ENCODE measurements at regions of chr3 and their contacts with region 1.

Region 1: DNA sequence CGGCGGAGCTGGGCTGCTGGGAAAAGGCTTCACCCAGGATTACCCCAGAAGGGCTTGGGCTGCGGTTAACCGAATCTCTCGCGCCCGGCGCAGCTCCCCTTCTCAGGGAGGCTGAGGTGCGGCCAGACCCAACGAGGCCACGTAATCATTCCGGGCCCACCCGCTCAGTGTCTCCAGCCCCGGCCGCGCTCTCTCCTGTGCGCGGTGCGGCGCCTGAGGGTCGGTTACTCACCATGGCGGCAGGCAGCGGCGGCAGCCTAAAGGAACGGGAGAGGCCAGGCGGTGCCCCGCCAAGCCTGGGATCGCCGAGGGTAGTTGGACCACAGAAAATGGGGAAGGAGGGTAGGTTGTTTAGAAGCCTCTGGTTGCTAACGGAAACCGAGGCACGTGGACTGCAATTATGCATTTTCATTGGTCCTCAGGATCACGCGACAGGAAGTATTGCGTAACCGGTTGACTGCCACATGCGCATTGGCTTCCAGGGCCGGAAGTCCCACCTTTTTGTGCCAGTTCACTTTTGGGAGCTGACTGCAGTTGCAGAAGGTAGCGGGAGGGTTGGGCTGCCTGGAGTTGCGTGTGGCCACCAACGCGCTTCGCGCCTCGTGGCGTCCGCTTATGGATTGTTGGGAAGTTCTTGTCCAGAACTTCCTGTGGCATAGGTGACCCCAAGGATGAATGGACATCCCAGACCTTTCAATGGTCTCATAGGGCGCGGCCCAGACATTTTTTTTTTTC is at the start of gene LZTFL1:
- DNase-seq: peak; percentile 62 to 94 (median 91)
- ATAC-seq: peak; percentile 94
- H3K4me3 ChIP-seq: peak within 1 kb of the TSS; percentile 77
- H3K4me3 Mint-ChIP-seq: peak within 1 kb of the TSS; percentile 90 to 97 (median 94)
- H3K27ac ChIP-seq: peak within 1 kb of the TSS; percentile 88
- H3K27ac Mint-ChIP-seq: peak within 1 kb of the TSS; percentile 86 to 98 (median 94)
- H3K4me1 ChIP-seq: peaks cover 8 to 13% of the 10 kb centered on the region in 2 donors
- H3K4me1 Mint-ChIP-seq: peaks cover 6 to 41% (median 25%) of the 10 kb centered on the region in 7 donors
- H3K27me3 ChIP-seq: no peaks in the 10 kb centered on the region
- H3K27me3 Mint-ChIP-seq: peaks cover 0 to 65% (median 0%) of the 10 kb centered on the region in 5 donors
- total RNA-seq, gene LZTFL1: 8.5 to 15.7 (median 12.6) TPM

Region 2: DNA sequence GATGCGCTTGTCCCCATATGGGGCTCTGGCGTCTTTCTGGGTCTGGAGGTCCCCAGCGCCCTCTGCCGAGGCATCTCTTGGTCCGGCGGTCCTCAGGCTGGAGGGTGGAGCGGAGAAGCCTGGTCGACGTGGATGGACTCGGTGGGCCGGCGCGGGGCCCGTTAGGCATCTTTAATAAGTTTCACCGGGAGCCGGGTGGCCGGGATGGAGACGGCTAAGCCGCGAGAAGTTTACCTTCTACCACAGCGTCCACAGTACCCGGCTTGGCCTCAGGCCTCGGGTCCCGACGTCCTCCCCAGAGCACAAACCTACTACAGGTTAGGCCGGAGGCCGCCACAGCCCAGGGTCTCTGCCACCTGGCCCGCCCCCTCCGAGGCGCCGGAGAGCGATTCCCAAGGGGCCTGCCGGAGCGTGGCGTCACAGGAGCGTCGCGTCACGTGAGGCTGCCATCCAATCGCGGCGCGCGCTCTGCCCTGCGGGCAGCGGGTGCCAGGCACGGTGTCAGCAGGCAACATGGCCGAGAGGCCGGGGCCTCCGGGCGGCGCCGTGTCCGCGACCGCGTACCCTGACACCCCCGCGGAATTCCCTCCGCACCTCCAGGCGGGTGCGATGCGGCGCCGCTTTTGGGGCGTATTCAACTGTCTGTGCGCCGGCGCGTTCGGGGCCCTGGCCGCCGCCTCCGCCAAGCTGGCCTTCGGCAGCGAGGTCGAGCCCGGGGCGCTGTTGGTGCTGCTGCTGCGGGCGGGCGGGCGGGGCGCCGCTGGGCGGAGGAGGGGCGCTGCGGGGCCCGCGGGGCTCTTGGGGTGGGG is 980.3 kb before region 1 on chr3 and contains the start of gene TMEM42:
- CTCF ChIA-PET with region 1: no interaction called
- POLR2A ChIA-PET with region 1: no interaction called
- intact Hi-C with region 1: loop called in 1 of 2 experiments (anchors 5 kb)
- DNase-seq: peak; percentile 81 to 89 (median 84)
- ATAC-seq: peak; percentile 97
- H3K4me3 ChIP-seq: peak within 1 kb of the TSS; percentile 78
- H3K4me3 Mint-ChIP-seq: peak within 1 kb of the TSS; percentile 88 to 92 (median 91)
- H3K27ac ChIP-seq: peak within 1 kb of the TSS; percentile 76
- H3K27ac Mint-ChIP-seq: peak within 1 kb of the TSS; percentile 86 to 97 (median 92)
- H3K4me1 ChIP-seq: peaks cover 15 to 29% of the 10 kb centered on the region in 2 donors
- H3K4me1 Mint-ChIP-seq: peaks cover 23 to 48% (median 43%) of the 10 kb centered on the region in 7 donors
- H3K27me3 ChIP-seq: no peaks in the 10 kb centered on the region
- H3K27me3 Mint-ChIP-seq: no peaks in the 10 kb centered on the region
- total RNA-seq, gene TMEM42: 12.1 to 25.1 (median 16.4) TPM

Region 3: GRCh38 chr3:45593708-45594609 is 248.0 kb before region 1 on chr3:
- CTCF ChIA-PET with region 1: no interaction called
- POLR2A ChIA-PET with region 1: no interaction called
- intact Hi-C with region 1: loop called in 1 of 2 experiments (anchors 5 kb)
- DNase-seq: peak; percentile 46 to 83 (median 70)
- ATAC-seq: peak; percentile 83
- H3K4me3 ChIP-seq: peak overlapping the region; percentile 71
- H3K4me3 Mint-ChIP-seq: peak overlapping the region; percentile 84 to 99 (median 90)
- H3K27ac ChIP-seq: peak overlapping the region; percentile 72
- H3K27ac Mint-ChIP-seq: peak overlapping the region; percentile 85 to 96 (median 91)
- H3K4me1 ChIP-seq: peaks cover 44 to 58% of the 10 kb centered on the region in 2 donors
- H3K4me1 Mint-ChIP-seq: peaks cover 48 to 61% (median 55%) of the 10 kb centered on the region in 7 donors
- H3K27me3 ChIP-seq: no peaks in the 10 kb centered on the region
- H3K27me3 Mint-ChIP-seq: peaks cover 0 to 3% (median 0%) of the 10 kb centered on the region in 5 donors

Region 4: GRCh38 chr3:45864760-45865519 is 23.0 kb after region 1 on chr3:
- CTCF ChIA-PET with region 1: no interaction called
- POLR2A ChIA-PET with region 1: interaction called, 4 read pairs
- intact Hi-C with region 1: loop called (anchors 1 kb)
- DNase-seq: peak in 8 of 9 donors; percentile 19 to 67 (median 46)
- ATAC-seq: peak; percentile 30
- H3K4me3 ChIP-seq: no peak overlapping the region
- H3K4me3 Mint-ChIP-seq: peak overlapping the region in 8 of 10 donors; percentile 25 to 63 (median 40)
- H3K27ac ChIP-seq: no peak overlapping the region
- H3K27ac Mint-ChIP-seq: peak overlapping the region in 4 of 9 donors; percentile 3 to 52 (median 44)
- H3K4me1 ChIP-seq: peaks cover 13 to 21% of the 10 kb centered on the region in 2 donors
- H3K4me1 Mint-ChIP-seq: peaks cover 24 to 58% (median 44%) of the 10 kb centered on the region in 7 donors
- H3K27me3 ChIP-seq: no peaks in the 10 kb centered on the region
- H3K27me3 Mint-ChIP-seq: peaks cover 0 to 58% (median 11%) of the 10 kb centered on the region in 5 donors

Region 5: DNA sequence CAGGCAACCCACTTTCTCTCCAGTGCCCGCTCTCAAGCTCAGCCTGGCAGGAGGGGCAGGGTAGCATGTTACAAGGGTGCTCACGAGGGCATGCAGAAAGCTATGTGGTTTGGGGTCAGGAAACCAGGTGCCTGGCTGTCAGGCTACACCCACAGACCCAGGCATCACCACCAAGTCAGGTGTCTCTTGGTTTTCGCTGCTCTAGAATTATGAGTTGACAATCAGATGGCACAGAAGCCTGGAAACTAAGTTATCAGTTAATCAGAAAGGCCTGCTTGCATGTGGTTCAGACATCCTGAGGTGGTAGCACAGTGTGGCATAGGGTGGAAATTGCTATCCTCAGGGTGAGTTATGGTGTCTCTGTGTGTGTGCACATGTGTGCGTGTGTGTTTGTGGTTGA is 28.2 kb after region 1 on chr3:
- CTCF ChIA-PET with region 1: no interaction called
- POLR2A ChIA-PET with region 1: interaction called, 4 read pairs
- intact Hi-C with region 1: loop called (anchors 1 kb)
- DNase-seq: peak in 8 of 9 donors; percentile 33 to 92 (median 88)
- ATAC-seq: peak; percentile 96
- H3K4me3 ChIP-seq: no peak overlapping the region
- H3K4me3 Mint-ChIP-seq: peak overlapping the region in 9 of 10 donors; percentile 0 to 74 (median 45)
- H3K27ac ChIP-seq: no peak overlapping the region
- H3K27ac Mint-ChIP-seq: peak overlapping the region in 8 of 9 donors; percentile 5 to 85 (median 44)
- H3K4me1 ChIP-seq: peaks cover 27 to 28% of the 10 kb centered on the region in 2 donors
- H3K4me1 Mint-ChIP-seq: peaks cover 18 to 58% (median 45%) of the 10 kb centered on the region in 7 donors
- H3K27me3 ChIP-seq: no peaks in the 10 kb centered on the region
- H3K27me3 Mint-ChIP-seq: peaks cover 0 to 70% (median 0%) of the 10 kb centered on the region in 5 donors

Region 6: DNA sequence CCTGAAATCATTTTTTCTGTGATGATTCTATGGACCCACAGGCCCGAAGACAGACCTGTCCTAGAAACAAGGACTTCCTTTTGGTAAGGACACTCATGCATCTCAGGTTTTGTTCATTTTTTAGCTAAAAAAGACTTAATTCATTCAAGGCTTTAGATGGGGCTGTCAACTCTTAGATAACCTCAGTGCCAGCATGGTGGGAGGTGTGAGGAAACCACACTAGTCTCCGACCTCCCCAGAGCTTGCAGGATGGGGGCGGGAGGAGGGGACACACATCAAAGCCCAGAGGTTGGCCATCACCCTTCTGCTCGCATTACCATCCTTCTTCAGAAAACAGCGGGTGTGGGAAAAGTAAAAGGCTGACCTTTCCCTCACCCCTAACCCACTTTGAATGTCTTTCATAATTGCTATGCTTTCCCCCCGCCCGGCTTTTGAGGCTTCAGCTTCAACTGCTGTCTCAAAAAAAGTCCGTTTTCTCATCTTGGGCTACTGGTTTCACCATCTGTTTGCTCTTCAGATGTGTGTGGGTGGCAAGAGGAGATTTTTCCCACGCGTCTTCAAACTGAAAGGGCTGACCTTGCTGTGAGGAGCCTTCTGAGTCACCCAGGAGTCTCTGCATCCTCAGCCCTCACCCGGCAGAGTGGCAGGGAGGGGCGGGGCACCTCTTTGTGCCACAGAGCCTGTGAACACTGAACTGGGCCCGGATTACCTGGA is 73.8 kb after region 1 on chr3:
- CTCF ChIA-PET with region 1: no interaction called
- POLR2A ChIA-PET with region 1: no interaction called
- intact Hi-C with region 1: loop called (anchors 5 kb)
- DNase-seq: peak in 8 of 9 donors; percentile 24 to 81 (median 38)
- ATAC-seq: peak; percentile 86
- H3K4me3 ChIP-seq: peak overlapping the region; percentile 53
- H3K4me3 Mint-ChIP-seq: peak overlapping the region; percentile 70 to 90 (median 83)
- H3K27ac ChIP-seq: no peak overlapping the region
- H3K27ac Mint-ChIP-seq: peak overlapping the region; percentile 36 to 82 (median 69)
- H3K4me1 ChIP-seq: peaks cover 15 to 24% of the 10 kb centered on the region in 2 donors
- H3K4me1 Mint-ChIP-seq: peaks cover 17 to 45% (median 25%) of the 10 kb centered on the region in 7 donors
- H3K27me3 ChIP-seq: no peaks in the 10 kb centered on the region
- H3K27me3 Mint-ChIP-seq: peaks cover 0 to 41% (median 0%) of the 10 kb centered on the region in 5 donors

Region 7: DNA sequence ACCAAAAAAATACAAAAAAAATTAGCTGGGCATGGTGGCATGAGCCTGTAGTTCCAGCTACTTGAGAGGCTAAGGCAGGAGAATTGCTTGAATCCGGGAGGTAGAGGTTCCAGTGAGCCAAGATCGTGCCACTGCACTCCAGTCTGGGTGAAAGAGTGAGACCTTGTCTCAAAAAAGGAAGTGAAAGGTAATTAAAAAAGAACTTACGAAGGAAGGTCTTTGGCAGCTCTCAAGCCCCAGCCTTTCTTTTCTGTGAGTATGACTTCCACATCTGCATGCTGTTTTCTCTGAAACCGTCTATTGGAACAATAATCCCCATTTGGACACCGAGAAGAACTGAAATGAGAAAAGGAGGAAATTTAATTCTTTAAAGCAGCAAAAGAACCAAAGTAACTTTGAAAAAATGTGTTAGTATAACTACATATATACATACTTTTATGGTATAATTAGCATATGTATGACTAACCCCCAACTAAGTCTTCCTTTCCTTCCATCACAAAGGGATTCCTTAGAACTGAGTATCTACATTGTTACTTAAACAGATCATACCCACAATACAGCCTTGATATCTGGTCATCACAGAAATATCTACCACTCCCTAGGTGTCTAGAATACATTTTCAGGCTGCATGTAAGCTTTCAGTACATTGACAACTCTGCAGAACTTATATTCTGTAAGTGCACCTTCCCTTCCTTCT is 1271.9 kb after region 1 on chr3:
- CTCF ChIA-PET with region 1: no interaction called
- POLR2A ChIA-PET with region 1: no interaction called
- intact Hi-C with region 1: no loop called
- DNase-seq: no peak
- ATAC-seq: no peak
- H3K4me3 ChIP-seq: no peak overlapping the region
- H3K4me3 Mint-ChIP-seq: no peak overlapping the region
- H3K27ac ChIP-seq: no peak overlapping the region
- H3K27ac Mint-ChIP-seq: peak overlapping the region in 1 of 9 donors; percentile 13
- H3K4me1 ChIP-seq: peaks cover under 1 to 4% of the 10 kb centered on the region in 2 donors
- H3K4me1 Mint-ChIP-seq: peaks cover 9 to 28% (median 19%) of the 10 kb centered on the region in 7 donors
- H3K27me3 ChIP-seq: no peaks in the 10 kb centered on the region
- H3K27me3 Mint-ChIP-seq: no peaks in the 10 kb centered on the region

Measured in naive thymus-derived CD4-positive, alpha-beta T cell (primary cell).